Mammary epithelial cell (primary cell): ENCODE measurements at regions of chr20 and their contacts with region 1.

Region 1: GRCh38 chr20:49132995-49133478 is 55.1 kb downstream of the STAU1 start:
- DNase-seq: peak; percentile 45
- H3K4me3 ChIP-seq: no peak overlapping the region
- H3K27ac ChIP-seq: no peak overlapping the region
- H3K4me1 ChIP-seq: no peaks in the 10 kb centered on the region
- H3K27me3 ChIP-seq: no peaks in the 10 kb centered on the region
- CTCF ChIP-seq: peak; percentile 37 to 53

Region 2: GRCh38 chr20:48432517-48432878 is 700.5 kb before region 1 on chr20:
- CTCF ChIA-PET with region 1: no interaction called
- dilution Hi-C with region 1: no loop called
- in situ Hi-C with region 1: no loop called
- intact Hi-C with region 1: no loop called
- DNase-seq: no peak
- H3K4me3 ChIP-seq: no peak overlapping the region
- H3K27ac ChIP-seq: no peak overlapping the region
- H3K4me1 ChIP-seq: no peaks in the 10 kb centered on the region
- H3K27me3 ChIP-seq: no peaks in the 10 kb centered on the region
- CTCF ChIP-seq: no peak

Region 3: GRCh38 chr20:48965189-48965910 is 167.7 kb before region 1 on chr20:
- CTCF ChIA-PET with region 1: no interaction called
- dilution Hi-C with region 1: no loop called
- in situ Hi-C with region 1: no loop called
- intact Hi-C with region 1: no loop called
- DNase-seq: no peak
- H3K4me3 ChIP-seq: no peak overlapping the region
- H3K27ac ChIP-seq: no peak overlapping the region
- H3K4me1 ChIP-seq: no peaks in the 10 kb centered on the region
- H3K27me3 ChIP-seq: no peaks in the 10 kb centered on the region
- CTCF ChIP-seq: no peak

Region 4: DNA sequence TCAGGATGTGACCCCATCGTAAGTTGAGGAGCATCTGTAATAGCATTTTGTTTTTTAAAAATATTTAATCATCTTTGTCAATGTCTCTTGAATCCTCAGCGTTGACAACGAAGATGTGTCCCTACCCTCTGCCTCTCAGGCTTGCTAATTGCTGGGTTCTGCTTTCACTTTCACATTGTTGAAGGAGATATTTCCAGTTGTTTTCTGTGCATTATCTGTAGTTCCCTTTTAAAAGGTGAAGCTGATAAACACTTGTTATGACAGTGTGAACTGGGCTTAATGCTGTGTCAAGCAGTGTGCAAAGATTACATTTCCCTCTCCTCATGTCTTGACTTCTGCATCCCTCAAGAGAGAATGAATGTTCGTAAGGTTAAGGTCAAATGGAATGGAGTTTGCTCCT is 32.1 kb before region 1 on chr20:
- CTCF ChIA-PET with region 1: no interaction called
- dilution Hi-C with region 1: loop called (anchors 5 kb)
- in situ Hi-C with region 1: no loop called
- intact Hi-C with region 1: no loop called
- DNase-seq: no peak
- H3K4me3 ChIP-seq: no peak overlapping the region
- H3K27ac ChIP-seq: no peak overlapping the region
- H3K4me1 ChIP-seq: no peaks in the 10 kb centered on the region
- H3K27me3 ChIP-seq: no peaks in the 10 kb centered on the region
- CTCF ChIP-seq: no peak

Region 5: DNA sequence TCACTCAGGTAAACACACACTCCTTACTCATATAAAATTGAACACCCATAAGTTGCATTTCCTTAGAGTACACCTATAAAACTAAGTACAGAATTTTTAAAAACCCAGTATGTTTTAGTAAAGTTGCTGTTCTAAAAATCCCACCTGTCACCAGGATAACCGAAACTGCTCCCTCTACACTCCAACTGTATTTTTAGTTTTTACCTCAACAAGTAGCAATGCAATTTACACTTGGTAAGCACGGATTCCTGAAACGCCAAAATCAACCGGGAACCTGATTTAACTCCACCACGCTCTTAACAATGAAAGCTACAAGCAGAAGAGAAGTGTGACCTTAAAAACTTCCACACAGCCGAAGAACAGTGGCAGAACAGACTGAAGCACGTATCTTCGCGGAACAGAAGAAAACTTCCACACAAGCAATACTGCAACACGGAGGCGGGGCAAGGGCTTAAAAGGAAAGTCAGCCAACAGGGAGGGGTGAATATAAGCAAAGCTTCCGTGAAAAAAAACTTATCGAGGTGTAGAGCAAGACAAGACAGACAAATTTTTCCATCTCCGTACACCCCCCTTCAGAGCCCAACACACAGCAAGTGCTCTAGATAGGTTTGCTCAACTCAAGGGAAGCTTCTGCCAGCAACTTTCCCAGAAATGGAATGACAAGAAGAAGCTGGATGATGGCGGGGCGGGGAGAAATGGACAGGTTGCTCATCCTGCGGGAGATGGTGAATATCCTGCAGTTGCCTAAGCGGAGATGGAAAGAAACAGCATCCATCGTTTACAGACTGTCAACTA is 53.7 kb after region 1 on chr20:
- CTCF ChIA-PET with region 1: no interaction called
- dilution Hi-C with region 1: loop called (anchors 10 kb)
- in situ Hi-C with region 1: no loop called
- intact Hi-C with region 1: loop called (anchors 2 kb)
- DNase-seq: peak; percentile 66
- H3K4me3 ChIP-seq: peak overlapping the region; percentile 67 to 82 (median 79)
- H3K27ac ChIP-seq: peak overlapping the region; percentile 68
- H3K4me1 ChIP-seq: peaks cover 7% of the 10 kb centered on the region
- H3K27me3 ChIP-seq: no peaks in the 10 kb centered on the region
- CTCF ChIP-seq: no peak

Region 6: DNA sequence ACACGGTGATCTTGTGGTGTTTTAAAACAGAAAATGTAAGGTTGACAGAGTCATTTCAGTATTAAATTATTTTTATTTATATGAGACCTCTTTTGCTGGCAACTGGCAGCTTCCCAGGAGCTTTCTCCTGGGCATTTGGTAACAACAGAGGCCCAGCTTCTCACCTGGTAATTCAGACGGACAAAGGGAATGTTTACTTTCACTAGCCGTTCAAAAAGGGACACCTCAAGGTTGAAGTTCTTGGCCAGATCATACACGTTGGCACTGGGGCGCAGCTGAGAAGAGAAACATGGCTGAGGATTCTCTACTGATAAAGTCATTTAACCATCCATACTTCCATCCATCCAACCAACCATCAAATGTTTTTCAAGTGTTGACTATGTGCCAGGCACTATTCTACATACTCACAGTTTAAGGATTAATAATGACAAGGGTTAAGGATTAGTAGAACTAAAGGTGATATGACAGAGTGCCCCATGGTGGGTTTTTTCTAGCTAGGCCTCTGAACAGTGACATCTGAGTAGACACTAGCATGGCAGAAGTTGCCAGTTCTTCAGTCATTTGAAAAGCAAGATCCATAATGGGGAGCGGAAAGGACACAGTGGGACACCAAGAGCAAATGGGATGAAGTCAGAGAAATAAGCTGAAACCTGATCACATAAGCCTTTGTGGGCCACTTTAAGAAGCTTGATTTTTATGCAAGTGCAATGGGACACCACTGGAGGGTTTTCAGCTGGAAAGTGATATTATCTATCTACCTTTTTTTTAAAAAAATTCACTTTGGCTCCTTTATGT is 119.7 kb after region 1 on chr20:
- CTCF ChIA-PET with region 1: no interaction called
- dilution Hi-C with region 1: loop called (anchors 5 kb)
- in situ Hi-C with region 1: no loop called
- intact Hi-C with region 1: no loop called
- DNase-seq: no peak
- H3K4me3 ChIP-seq: no peak overlapping the region
- H3K27ac ChIP-seq: no peak overlapping the region
- H3K4me1 ChIP-seq: peaks cover 11% of the 10 kb centered on the region
- H3K27me3 ChIP-seq: no peaks in the 10 kb centered on the region
- CTCF ChIP-seq: no peak

Region 7: GRCh38 chr20:49323622-49324238 is 190.7 kb after region 1 on chr20:
- CTCF ChIA-PET with region 1: no interaction called
- dilution Hi-C with region 1: no loop called
- in situ Hi-C with region 1: no loop called
- intact Hi-C with region 1: loop called (anchors 2 kb)
- DNase-seq: peak; percentile 73
- H3K4me3 ChIP-seq: no peak overlapping the region
- H3K27ac ChIP-seq: no peak overlapping the region
- H3K4me1 ChIP-seq: peaks cover 9% of the 10 kb centered on the region
- H3K27me3 ChIP-seq: peaks cover 16% of the 10 kb centered on the region
- CTCF ChIP-seq: peak; percentile 25 to 59